Motor neuron (in vitro differentiated cells): ENCODE measurements at regions of chr5 and their contacts with region 1.

Region 1: DNA sequence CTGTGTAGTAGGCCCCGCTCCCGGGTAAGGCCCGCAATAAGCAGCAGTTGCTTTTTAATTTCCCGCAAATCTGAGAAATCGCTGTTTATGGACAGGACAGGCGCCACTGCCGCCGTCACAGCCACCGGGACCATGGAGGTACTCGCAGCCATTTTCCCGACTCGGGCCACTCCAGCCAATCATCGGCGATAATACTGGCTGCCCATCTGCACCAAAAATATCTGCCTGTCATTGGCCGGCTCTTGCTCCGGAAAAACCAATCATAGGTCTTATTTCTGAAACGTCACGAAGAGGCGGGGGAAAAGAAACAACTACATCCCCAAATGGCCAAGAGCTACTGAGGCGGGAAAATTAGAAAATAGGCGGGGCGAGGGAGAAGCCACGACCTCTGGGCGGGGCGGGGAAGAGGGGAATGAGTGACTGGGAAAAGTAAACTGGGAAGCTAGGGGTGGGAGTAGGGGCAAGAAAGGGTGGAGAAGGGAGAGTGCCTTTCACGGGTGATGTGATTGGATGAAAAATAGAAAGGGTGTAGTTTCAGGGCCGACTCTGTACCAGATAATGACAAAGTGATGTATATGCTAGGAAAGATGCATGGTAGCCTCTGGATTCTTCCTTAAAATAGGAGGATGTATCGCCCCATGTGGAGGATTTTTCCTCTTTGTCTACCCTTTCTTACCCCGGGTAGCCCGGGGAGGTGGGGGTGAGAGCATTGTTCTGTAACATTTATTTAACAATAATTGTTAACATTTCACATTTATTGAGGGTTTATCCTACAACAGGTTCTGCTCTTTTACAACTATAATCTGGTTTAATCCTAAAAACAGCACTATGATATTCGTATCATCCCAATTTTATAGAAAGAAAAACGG is at the start of gene CDC23:
- ATAC-seq: peak; percentile 94 to 100 (median 99)
- H3K4me3 ChIP-seq: peak within 1 kb of the TSS; percentile 71 to 98 (median 81)
- H3K27ac ChIP-seq: peak within 1 kb of the TSS; percentile 84 to 93
- H3K4me1 ChIP-seq: peaks cover 6 to 8% of the 10 kb centered on the region in 2 donors
- total RNA-seq, gene CDC23: 17.7 to 40.7 (median 32.5) TPM

Region 2: DNA sequence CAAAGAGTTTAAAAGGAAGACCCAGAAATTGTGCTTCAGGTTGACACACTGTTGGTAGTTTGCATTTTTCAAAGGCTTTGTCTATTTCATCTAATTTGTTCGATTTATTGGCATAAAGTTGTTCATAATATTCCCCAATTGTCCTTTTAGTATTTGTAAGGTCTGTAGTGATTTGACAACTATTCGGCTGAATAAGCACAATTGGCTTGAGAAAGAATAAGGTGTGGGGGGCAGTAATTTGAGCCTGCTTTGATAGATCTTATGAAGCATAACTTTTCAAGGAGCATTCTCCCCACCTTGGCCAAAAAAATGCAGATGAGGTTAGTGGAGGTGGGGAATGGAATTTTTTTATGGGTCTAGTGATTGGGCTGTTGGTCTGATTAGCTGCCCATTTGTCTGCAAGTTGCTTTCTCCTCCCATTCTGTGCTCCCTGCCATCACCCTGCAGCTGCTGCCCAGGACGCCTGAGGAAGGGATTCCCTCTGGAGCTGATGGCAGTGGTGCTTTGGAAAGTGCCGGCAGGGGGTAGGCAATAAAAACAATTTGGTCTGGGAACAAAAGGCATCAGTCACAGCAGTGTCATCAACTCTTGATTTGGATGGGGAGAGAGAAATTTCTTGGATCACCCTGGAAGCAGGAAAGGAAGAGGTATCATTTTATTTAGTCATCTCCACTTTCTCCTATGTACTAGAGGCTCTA is 103.0 kb before region 1 on chr5:
- in situ Hi-C with region 1: no loop called
- ATAC-seq: no peak
- H3K4me3 ChIP-seq: no peak overlapping the region
- H3K27ac ChIP-seq: no peak overlapping the region
- H3K4me1 ChIP-seq: peaks cover 0 to 5% of the 10 kb centered on the region in 2 donors

Region 3: DNA sequence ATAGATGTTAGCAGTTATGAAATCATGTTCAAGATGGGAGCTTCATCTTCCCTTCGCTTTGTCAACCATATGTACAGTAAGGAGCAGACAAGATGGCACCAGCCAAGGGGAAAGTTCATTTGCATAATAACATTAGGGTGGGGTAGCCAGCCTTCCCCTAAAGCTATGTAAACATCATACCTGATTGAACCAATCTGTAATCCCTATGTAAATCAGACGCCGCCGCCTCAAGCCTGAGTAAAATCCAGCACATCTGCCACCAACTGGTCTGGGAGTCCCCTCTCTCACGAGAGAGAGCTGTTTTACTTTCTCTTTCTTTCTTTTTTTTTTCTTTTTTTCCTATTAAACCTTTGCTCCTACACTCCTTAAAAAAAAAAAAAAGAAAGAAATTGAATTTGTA is 194.6 kb after region 1 on chr5:
- in situ Hi-C with region 1: loop called in 1 of 9 experiments (anchors 25 kb)
- ATAC-seq: peak in 3 of 8 experiments; percentile 97 to 100 (median 100)
- H3K4me3 ChIP-seq: no peak overlapping the region
- H3K27ac ChIP-seq: no peak overlapping the region
- H3K4me1 ChIP-seq: no peaks in the 10 kb centered on the region

Region 4: GRCh38 chr5:138809391-138809790 is 596.0 kb after region 1 on chr5:
- in situ Hi-C with region 1: no loop called
- ATAC-seq: peak in 5 of 8 experiments; percentile 27 to 72 (median 48)
- H3K4me3 ChIP-seq: no peak overlapping the region
- H3K27ac ChIP-seq: no peak overlapping the region
- H3K4me1 ChIP-seq: peaks cover 0 to 6% of the 10 kb centered on the region in 2 donors